ENCODE measurements at regions of chr2 and their contacts with region 1.

Region 1: GRCh38 chr2:20015472-20016083 is 3.1 kb upstream of the MATN3 start:
- DNase-seq: no peak
- H3K4me3 ChIP-seq: no peak overlapping the region
- H3K27ac ChIP-seq: no peak overlapping the region
- H3K4me1 ChIP-seq: no peaks in the 10 kb centered on the region
- H3K27me3 ChIP-seq: peaks cover 15% of the 10 kb centered on the region
- CTCF ChIP-seq: peak; percentile 59

Region 2: GRCh38 chr2:20057268-20057667 is 41.7 kb after region 1 on chr2:
- intact Hi-C with region 1: loop called (anchors 5 kb)
- DNase-seq: no peak
- H3K4me3 ChIP-seq: no peak overlapping the region
- H3K27ac ChIP-seq: no peak overlapping the region
- H3K4me1 ChIP-seq: no peaks in the 10 kb centered on the region
- H3K27me3 ChIP-seq: no peaks in the 10 kb centered on the region
- CTCF ChIP-seq: no peak

Region 3: DNA sequence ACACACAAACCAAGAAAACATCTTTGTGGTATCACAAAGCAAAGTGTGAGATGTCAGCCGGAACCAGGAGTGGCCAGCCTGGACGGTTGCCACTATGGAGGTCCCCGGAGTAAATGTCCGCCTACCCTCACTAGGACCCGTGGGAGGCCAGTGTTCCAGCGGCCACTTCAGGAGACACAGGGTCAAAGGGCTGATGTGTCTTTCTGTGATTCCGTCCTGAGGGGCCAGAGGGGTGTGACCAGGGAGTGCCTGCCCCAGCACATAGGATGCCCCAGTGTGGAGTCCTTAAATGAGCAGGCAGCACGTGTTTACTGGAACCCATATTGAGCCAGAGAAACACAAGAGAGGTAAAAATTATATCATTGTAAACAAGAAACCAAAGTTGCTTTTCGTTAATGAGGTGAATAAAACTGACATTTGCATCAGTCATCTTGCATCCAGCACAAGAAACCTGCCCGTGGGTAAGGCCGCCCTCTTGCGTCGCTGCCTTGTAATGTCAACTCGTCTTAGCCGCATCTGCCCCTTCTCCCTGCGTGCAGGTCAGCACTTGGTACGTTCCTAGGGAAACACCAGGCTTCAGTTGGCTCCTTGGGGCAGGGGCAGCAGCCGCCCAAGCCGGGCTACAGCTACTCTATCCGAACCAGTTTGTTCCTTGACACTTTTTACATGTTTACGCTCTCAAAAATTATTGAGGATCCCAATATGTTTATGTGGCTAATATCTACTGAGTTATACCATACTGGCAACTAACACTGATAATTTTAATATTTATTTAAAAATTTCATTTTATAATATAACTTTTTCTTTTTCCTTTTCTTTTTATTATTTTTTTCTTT is 82.5 kb after region 1 on chr2:
- intact Hi-C with region 1: loop called (anchors 2 kb)
- DNase-seq: peak; percentile 86
- H3K4me3 ChIP-seq: no peak overlapping the region
- H3K27ac ChIP-seq: no peak overlapping the region
- H3K4me1 ChIP-seq: no peaks in the 10 kb centered on the region
- H3K27me3 ChIP-seq: no peaks in the 10 kb centered on the region
- CTCF ChIP-seq: peak; percentile 81